Activated CD8-positive, alpha-beta memory T cell treated with anti-CD3 and anti-CD28 coated beads, Interleukin-2, amount 10 ng/mL, durations not matched to agents 7 days and 5 days (primary cell): ENCODE measurements at regions of chr22 and their contacts with region 1.

Region 1: DNA sequence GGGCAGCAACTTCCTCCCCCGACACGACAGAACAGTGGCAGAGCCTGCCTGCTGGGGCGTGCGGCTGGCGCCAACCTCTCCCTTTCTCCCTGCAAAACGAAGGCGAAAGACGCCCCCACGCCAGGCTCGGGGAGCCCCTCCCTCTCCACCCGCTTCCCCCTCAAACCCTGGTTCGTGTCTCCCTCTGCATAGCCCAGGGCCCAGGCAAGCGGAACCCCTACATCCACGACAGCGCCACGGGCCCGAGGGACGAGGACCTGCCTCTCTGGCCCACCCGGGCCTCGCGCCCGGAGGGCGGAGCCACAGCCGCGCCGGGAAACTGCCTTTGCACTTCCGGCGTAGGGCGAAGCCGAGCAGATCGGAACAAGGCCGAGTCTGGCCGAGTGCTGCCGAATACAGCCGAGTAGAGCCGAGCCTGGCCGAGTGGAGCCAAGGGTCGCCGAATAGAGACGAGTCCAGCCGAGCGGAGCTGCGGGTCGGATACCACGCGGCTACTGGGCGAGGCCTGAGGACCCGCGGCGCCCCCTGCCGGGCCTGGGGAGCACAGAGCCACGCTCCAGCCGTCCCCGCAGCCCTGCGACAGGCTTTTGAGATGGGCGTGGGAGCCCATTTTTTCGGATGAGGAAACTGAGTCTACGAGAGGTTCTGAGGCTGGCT is 11.2 kb upstream of the C1QTNF6 start:
- DNase-seq: peak; percentile 100
- ATAC-seq: peak; percentile 97
- H3K4me3 Mint-ChIP-seq: peak overlapping the region; percentile 80
- H3K27ac Mint-ChIP-seq: peak overlapping the region; percentile 94
- H3K4me1 Mint-ChIP-seq: peaks cover 33% of the 10 kb centered on the region
- H3K27me3 Mint-ChIP-seq: no peaks in the 10 kb centered on the region

Region 2: GRCh38 chr22:37043828-37044538 is 155.2 kb before region 1 on chr22:
- CTCF ChIA-PET with region 1: interaction called, 23 read pairs
- DNase-seq: peak; percentile 78
- ATAC-seq: peak; percentile 92
- H3K4me3 Mint-ChIP-seq: no peak overlapping the region
- H3K27ac Mint-ChIP-seq: no peak overlapping the region
- H3K4me1 Mint-ChIP-seq: peaks cover 26% of the 10 kb centered on the region
- H3K27me3 Mint-ChIP-seq: peaks cover 20% of the 10 kb centered on the region

Region 3: GRCh38 chr22:37077884-37078485 is 121.2 kb before region 1 on chr22:
- CTCF ChIA-PET with region 1: interaction called, 53 read pairs
- DNase-seq: peak; percentile 90
- ATAC-seq: peak; percentile 16
- H3K4me3 Mint-ChIP-seq: peak overlapping the region; percentile 32
- H3K27ac Mint-ChIP-seq: peak overlapping the region; percentile 99
- H3K4me1 Mint-ChIP-seq: peaks cover 69% of the 10 kb centered on the region
- H3K27me3 Mint-ChIP-seq: no peaks in the 10 kb centered on the region

Region 4: GRCh38 chr22:37148742-37149665 is 50.2 kb before region 1 on chr22:
- CTCF ChIA-PET with region 1: interaction called, 51 read pairs
- DNase-seq: no peak
- ATAC-seq: no peak
- H3K4me3 Mint-ChIP-seq: peak overlapping the region; percentile 100
- H3K27ac Mint-ChIP-seq: peak overlapping the region; percentile 99
- H3K4me1 Mint-ChIP-seq: peaks cover 57% of the 10 kb centered on the region
- H3K27me3 Mint-ChIP-seq: no peaks in the 10 kb centered on the region

Region 5: GRCh38 chr22:37186228-37186996 is 12.8 kb before region 1 on chr22:
- CTCF ChIA-PET with region 1: interaction called, 47 read pairs
- DNase-seq: peak; percentile 73
- ATAC-seq: peak; percentile 87
- H3K4me3 Mint-ChIP-seq: peak overlapping the region; percentile 56
- H3K27ac Mint-ChIP-seq: peak overlapping the region; percentile 79
- H3K4me1 Mint-ChIP-seq: peaks cover 66% of the 10 kb centered on the region
- H3K27me3 Mint-ChIP-seq: no peaks in the 10 kb centered on the region

Region 6: GRCh38 chr22:37218771-37219411 is 19.7 kb after region 1 on chr22:
- CTCF ChIA-PET with region 1: interaction called, 62 read pairs
- DNase-seq: peak; percentile 82
- ATAC-seq: peak; percentile 59
- H3K4me3 Mint-ChIP-seq: peak overlapping the region; percentile 71
- H3K27ac Mint-ChIP-seq: peak overlapping the region; percentile 92
- H3K4me1 Mint-ChIP-seq: peaks cover 74% of the 10 kb centered on the region
- H3K27me3 Mint-ChIP-seq: no peaks in the 10 kb centered on the region

Region 7: GRCh38 chr22:37244114-37244921 is 45.1 kb after region 1 on chr22 and contains the start of gene RAC2:
- CTCF ChIA-PET with region 1: interaction called, 15 read pairs
- DNase-seq: peak; percentile 97
- ATAC-seq: peak; percentile 60
- H3K4me3 Mint-ChIP-seq: peak within 1 kb of the TSS; percentile 100
- H3K27ac Mint-ChIP-seq: peak within 1 kb of the TSS; percentile 98
- H3K4me1 Mint-ChIP-seq: peaks cover 49% of the 10 kb centered on the region
- H3K27me3 Mint-ChIP-seq: no peaks in the 10 kb centered on the region
- total RNA-seq, gene RAC2: 834 to 907 TPM

Region 8: GRCh38 chr22:37716708-37717107 is 517.5 kb after region 1 on chr22:
- CTCF ChIA-PET with region 1: no interaction called
- DNase-seq: no peak
- ATAC-seq: no peak
- H3K4me3 Mint-ChIP-seq: no peak overlapping the region
- H3K27ac Mint-ChIP-seq: no peak overlapping the region
- H3K4me1 Mint-ChIP-seq: peaks cover 7% of the 10 kb centered on the region
- H3K27me3 Mint-ChIP-seq: no peaks in the 10 kb centered on the region